Thyroid gland (tissue), 4 donors: ENCODE measurements at regions of chr16 and their contacts with region 1.

Region 1: GRCh38 chr16:23564575-23565363 is 7.2 kb downstream of the UBFD1 start:
- DNase-seq: peak; percentile 78 to 83
- H3K4me3 ChIP-seq: no peak overlapping the region
- H3K27ac ChIP-seq: peak overlapping the region in 1 of 3 donors; percentile 44
- H3K4me1 ChIP-seq: no peaks in the 10 kb centered on the region
- H3K27me3 ChIP-seq: no peaks in the 10 kb centered on the region
- CTCF ChIP-seq: no peak
- POLR2A ChIP-seq: no peak

Region 2: GRCh38 chr16:23499801-23500200 is 65.0 kb before region 1 on chr16:
- intact Hi-C with region 1: no loop called
- DNase-seq: no peak
- H3K4me3 ChIP-seq: no peak overlapping the region
- H3K27ac ChIP-seq: peak overlapping the region in 2 of 3 donors; percentile 33 to 40
- H3K4me1 ChIP-seq: peaks cover 71 to 88% of the 10 kb centered on the region in 2 donors
- H3K27me3 ChIP-seq: no peaks in the 10 kb centered on the region
- CTCF ChIP-seq: no peak
- POLR2A ChIP-seq: no peak

Region 3: DNA sequence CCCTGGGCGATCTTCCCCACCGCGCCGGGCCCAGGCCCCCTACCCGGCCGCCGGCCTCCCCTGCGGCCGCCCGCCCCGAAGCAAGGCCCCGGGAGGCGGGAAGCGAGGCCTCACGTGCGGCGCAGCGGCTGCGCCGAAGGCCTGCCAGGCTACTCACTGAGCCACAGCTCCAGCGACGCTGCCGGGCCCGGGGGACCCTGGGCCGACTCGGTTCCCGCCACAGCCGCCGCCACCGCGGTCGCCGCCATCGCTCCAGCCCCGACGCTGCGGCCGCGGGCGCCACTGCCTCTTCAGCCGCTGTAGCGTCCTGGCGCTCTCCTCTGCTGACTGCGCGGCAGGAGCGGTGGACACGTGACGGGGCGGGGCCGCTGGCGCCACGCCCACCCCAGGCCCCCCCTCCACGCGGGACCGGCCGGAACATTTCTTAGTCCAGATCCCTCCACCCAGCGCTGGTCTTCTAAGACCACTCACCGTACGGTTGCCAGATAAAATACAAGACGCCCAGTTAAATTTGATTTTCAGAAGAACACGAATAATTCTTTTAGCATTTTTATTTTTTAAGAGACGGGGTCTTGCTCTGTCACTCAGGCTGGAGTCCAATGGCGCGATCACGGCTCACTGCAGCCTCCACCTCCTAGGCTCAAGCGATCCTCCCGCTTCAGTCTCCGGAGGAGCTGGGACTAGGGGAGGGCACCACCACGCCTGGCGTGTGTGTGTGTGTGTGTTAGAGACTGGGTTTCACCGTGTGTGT is 54.4 kb before region 1 on chr16 and contains the start of gene GGA2:
- intact Hi-C with region 1: loop called (anchors 5 kb)
- DNase-seq: peak; percentile 85 to 86
- H3K4me3 ChIP-seq: peak within 1 kb of the TSS; percentile 67 to 95 (median 78)
- H3K27ac ChIP-seq: peak within 1 kb of the TSS; percentile 80 to 94 (median 93)
- H3K4me1 ChIP-seq: peaks cover 29 to 40% of the 10 kb centered on the region in 2 donors
- H3K27me3 ChIP-seq: no peaks in the 10 kb centered on the region
- CTCF ChIP-seq: no peak
- POLR2A ChIP-seq: peak; percentile 91 to 98
- total RNA-seq, gene GGA2: 103 to 190 (median 159) TPM

Region 4: DNA sequence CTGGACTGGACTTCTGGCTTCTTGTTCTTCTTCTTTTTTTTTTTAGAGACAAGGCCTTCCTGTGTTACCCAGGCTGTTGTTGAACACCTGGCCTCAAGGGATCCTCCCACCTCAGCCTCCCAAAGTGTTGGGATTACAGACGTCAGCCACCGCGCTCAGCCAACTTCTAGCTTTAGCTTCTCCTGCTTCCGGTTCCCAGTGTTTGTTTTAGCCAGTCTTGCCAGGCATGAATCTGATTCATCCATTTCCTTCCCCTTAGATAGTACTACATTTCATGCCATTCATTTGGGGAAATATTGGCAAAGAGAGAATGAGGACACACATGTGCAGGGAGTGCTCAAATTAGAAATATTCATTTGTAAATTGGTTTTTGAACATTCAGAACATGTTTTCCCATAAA is 43.4 kb after region 1 on chr16:
- intact Hi-C with region 1: no loop called
- DNase-seq: no peak
- H3K4me3 ChIP-seq: no peak overlapping the region
- H3K27ac ChIP-seq: no peak overlapping the region
- H3K4me1 ChIP-seq: no peaks in the 10 kb centered on the region
- H3K27me3 ChIP-seq: no peaks in the 10 kb centered on the region
- CTCF ChIP-seq: no peak
- POLR2A ChIP-seq: no peak

Region 5: GRCh38 chr16:23640931-23641765 is 76.4 kb after region 1 on chr16 and contains the starts of genes DCTN5 and PALB2:
- intact Hi-C with region 1: loop called (anchors 10 kb)
- DNase-seq: peak; percentile 92 to 94
- H3K4me3 ChIP-seq: peak within 1 kb of the TSS; percentile 63 to 88 (median 80)
- H3K27ac ChIP-seq: peak within 1 kb of the TSS; percentile 48 to 71 (median 56)
- H3K4me1 ChIP-seq: peaks cover 14 to 15% of the 10 kb centered on the region in 2 donors
- H3K27me3 ChIP-seq: no peaks in the 10 kb centered on the region
- CTCF ChIP-seq: peak in 1 of 6 experiments; percentile 13
- POLR2A ChIP-seq: peak in 1 of 2 donors; percentile 61
- total RNA-seq, gene DCTN5: 24.1 to 51.1 (median 47.6) TPM
- total RNA-seq, gene PALB2: 10.8 to 17.2 (median 14.0) TPM

Region 6: GRCh38 chr16:23784811-23785447 is 220.2 kb after region 1 on chr16:
- intact Hi-C with region 1: no loop called
- DNase-seq: no peak
- H3K4me3 ChIP-seq: no peak overlapping the region
- H3K27ac ChIP-seq: no peak overlapping the region
- H3K4me1 ChIP-seq: no peaks in the 10 kb centered on the region
- H3K27me3 ChIP-seq: no peaks in the 10 kb centered on the region
- CTCF ChIP-seq: no peak
- POLR2A ChIP-seq: no peak